ENCODE measurements at regions of chr2 and their contacts with region 1.

Region 1: DNA sequence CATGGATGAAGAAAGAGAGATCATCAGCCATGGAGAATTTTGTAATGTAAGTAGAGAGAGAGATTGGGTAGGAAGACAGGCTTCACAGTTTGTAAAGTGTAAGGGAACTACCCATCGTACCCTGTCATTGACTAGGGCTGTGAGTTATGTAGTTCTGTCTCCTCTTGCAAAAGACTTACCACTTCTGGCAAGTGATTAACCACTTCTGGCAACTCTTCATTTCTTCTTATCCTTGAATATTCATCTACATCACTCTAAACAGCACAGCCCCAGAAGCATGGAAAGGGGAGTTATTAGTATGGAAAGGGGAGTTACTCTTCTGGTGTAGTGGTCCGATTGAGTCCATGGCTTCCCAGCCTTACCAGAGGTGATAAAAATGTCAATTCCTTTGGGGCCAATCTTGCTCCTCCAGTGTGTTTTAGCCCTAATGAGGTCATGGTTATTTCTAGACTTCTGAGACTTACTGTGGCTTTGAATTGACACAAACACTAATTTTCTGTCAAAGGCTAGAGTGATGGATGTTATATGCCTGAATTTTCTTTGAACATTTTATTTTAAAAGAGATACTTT is 52.0 kb downstream of the STAT1 start:
- ATAC-seq: peak in 4 of 8 experiments; percentile 36 to 95 (median 78)
- H3K4me3 ChIP-seq: no peak overlapping the region
- H3K27ac ChIP-seq: no peak overlapping the region
- H3K4me1 ChIP-seq: no peaks in the 10 kb centered on the region

Region 2: DNA sequence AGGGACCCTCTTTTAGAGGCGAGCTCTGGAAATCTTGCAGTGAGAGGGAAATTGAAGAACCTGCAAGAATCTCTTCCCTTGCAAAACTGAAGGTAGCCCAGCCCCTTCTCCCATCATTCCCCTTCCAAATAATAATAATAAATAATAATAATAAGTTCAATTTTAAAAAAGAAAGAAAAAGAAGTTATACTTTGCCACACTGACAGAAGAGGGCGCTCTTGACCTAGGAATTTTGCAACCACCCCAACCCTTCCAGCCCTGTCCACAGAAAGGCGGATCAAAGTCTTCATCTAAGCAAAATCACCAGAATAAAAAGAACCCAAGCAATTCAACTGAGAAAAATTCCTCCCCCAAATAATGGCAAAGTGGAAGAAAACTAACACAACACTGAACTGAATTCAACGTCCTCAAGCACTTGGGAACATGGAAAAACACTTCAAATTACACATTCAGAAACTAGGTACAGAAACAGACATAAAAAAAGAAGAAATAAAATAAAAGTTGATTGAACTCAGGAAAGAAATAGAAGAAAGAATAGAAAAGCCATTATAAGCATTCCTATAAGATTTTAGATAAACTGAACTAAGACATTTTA is 180.3 kb before region 1 on chr2:
- in situ Hi-C with region 1: loop called in 1 of 9 experiments (anchors 25 kb)
- ATAC-seq: peak in 3 of 8 experiments; percentile 41 to 68 (median 48)
- H3K4me3 ChIP-seq: no peak overlapping the region
- H3K27ac ChIP-seq: no peak overlapping the region
- H3K4me1 ChIP-seq: peaks cover 0 to 4% of the 10 kb centered on the region in 2 donors